BJ (cell line): ENCODE measurements at regions of chr5 and their contacts with region 1.

Region 1: GRCh38 chr5:90251447-90251846 is 158.1 kb downstream of the CETN3 start:
- DNase-seq: no peak
- H3K4me3 ChIP-seq: no peak overlapping the region
- H3K27me3 ChIP-seq: no peaks in the 10 kb centered on the region
- CTCF ChIP-seq: no peak

Region 2: DNA sequence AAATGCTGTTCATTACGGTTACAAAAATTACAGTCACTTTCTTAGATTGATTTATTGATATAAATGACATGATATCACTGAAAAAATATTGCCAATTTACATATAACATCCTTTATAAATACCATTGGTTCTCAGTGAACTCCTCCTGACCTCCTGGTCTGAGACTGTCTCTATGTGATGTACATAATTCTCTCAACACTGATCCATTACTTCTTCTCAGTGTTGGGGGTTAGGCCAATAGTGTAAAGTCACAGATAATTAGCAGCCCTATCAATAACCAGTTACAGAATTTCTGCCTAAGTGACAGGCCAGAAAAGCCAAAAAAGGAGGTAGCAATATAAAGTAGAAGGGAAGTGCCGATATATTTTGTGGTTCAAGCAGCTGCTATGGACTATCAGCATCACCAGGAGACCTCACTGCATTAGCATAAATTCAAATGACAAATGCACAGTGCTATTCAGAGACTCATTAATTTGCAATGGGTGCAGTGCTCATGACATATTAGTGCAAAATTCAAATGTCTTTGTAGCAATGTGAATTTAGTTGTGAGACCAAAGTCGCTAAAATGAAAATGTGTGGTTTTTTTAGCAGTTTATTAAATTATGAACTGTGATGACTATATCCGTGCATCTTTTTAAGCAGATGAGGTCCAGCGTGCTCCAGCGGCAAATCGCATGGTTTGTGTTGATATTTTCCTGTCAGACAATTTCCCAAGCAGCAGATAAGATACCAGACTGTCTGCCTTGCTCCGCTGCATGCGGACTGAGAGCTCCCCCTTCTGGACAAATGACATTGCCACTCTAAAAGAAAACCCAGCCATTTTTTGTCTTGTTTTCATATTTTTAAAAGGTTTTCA is 13.5 kb after region 1 on chr5:
- CTCF ChIA-PET with region 1: interaction called, 14 read pairs
- POLR2A ChIA-PET with region 1: no interaction called
- DNase-seq: no peak
- H3K4me3 ChIP-seq: no peak overlapping the region
- H3K27me3 ChIP-seq: no peaks in the 10 kb centered on the region; the same call in 1 of the 2 replicates
- CTCF ChIP-seq: peak; percentile 94